Activated CD8-positive, alpha-beta T cell treated with anti-CD3 and anti-CD28 coated beads, Interleukin-2, amount 10 ng/mL, durations not matched to agents 7 days and 5 days (primary cell): ENCODE measurements at regions of chr17 and their contacts with region 1.

Region 1: GRCh38 chr17:44218344-44219107 is 949 bp downstream of the UBTF start:
- DNase-seq: peak; percentile 90
- ATAC-seq: peak; percentile 60
- H3K4me3 Mint-ChIP-seq: peak overlapping the region; percentile 97
- H3K27ac Mint-ChIP-seq: peak overlapping the region; percentile 85
- H3K4me1 Mint-ChIP-seq: peaks cover 46% of the 10 kb centered on the region
- H3K27me3 Mint-ChIP-seq: no peaks in the 10 kb centered on the region

Region 2: DNA sequence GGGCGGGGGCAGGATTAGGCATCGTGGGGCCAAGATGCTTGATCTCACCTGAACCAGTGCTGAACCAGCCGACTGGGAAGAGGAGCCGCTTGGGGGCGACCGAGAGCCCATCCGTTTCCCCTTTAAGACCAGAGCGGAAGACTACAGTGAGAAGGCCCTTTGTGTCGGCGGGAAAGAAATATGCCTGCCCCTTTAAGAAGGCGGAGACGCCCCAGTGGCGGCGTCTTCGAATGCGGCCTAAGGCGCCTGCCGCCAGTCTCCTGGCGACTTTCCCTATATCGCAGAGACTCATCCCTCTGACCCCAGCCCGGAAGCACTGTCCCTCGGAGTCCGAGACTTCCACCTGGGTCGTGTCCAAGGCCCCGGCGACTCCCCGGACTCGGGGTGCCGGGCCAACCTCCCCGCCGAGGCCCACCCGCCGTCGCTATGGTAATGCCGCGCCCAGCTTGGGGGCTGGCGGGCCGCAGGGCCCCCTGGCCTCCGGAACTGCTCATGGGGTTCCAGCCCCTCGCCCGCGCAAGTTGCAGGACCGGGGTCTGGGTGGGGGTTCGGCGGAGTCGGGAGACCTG is 76.7 kb before region 1 on chr17 and contains the start of gene HROB:
- CTCF ChIA-PET with region 1: no interaction called
- POLR2A ChIA-PET with region 1: no interaction called
- DNase-seq: peak; percentile 99
- ATAC-seq: peak; percentile 96
- H3K4me3 Mint-ChIP-seq: peak within 1 kb of the TSS; percentile 88
- H3K27ac Mint-ChIP-seq: peak within 1 kb of the TSS; percentile 91
- H3K4me1 Mint-ChIP-seq: peaks cover 32% of the 10 kb centered on the region
- H3K27me3 Mint-ChIP-seq: peaks cover 4% of the 10 kb centered on the region
- total RNA-seq, gene HROB: 16.4 to 18.0 TPM

Region 3: DNA sequence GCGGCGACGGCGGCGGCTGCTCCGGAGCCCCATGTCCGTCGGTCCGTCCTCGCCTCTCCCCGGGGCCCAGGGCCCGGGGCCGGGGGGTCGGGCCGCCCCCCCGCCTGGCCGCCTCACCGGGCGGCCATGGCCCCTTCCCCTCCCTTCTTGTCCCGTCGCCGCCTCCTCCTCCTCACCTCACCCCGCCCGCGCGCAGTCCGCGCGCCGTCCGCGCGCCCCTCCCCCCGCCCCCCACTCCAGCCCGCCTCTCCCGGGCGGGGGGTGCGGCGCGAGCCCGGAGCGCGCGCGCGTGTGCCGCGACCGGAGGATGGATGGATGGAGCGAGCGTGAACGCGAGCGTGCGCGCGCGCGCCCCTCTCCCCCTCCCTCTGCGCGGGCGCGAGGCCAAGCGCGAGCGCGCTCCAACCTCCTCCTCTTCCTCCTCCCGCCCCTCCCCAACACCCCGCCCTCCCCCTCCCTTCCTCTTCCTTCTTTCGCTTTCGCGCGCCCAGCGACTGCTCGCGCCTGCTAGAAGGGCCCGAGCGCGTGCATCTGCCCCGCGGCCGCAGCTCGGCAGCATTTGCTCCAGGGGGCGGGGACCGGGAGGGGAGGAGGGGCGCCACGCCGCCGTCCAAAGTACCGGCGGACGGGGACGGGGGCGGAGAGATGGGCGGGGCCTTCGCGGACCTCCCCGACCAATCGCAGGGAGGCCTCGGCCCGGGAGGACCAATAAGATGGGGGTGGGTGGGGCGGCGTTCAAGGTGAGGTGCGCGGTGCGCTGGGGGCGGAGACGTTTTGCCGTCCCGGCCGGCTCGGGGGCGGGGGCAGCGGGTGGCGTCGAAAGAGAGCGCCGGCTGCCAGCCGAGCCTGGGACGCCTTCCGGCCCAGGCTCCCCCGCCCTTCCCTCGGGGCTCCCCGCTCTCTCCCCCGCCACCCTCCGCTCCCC is 18.7 kb before region 1 on chr17 and contains the start of gene ATXN7L3:
- CTCF ChIA-PET with region 1: interaction called, 30 read pairs
- POLR2A ChIA-PET with region 1: interaction called, 15 read pairs
- DNase-seq: peak; percentile 100
- ATAC-seq: peak; percentile 84
- H3K4me3 Mint-ChIP-seq: peak within 1 kb of the TSS; percentile 88
- H3K27ac Mint-ChIP-seq: peak within 1 kb of the TSS; percentile 95
- H3K4me1 Mint-ChIP-seq: peaks cover 43% of the 10 kb centered on the region
- H3K27me3 Mint-ChIP-seq: no peaks in the 10 kb centered on the region
- total RNA-seq, gene ATXN7L3: 116 to 120 TPM

Region 4: GRCh38 chr17:44314869-44315661 is 96.5 kb after region 1 on chr17:
- CTCF ChIA-PET with region 1: interaction called, 12 read pairs
- POLR2A ChIA-PET with region 1: interaction called, 5 read pairs
- DNase-seq: peak; percentile 63
- ATAC-seq: peak; percentile 71
- H3K4me3 Mint-ChIP-seq: peak overlapping the region; percentile 57
- H3K27ac Mint-ChIP-seq: no peak overlapping the region
- H3K4me1 Mint-ChIP-seq: peaks cover 12% of the 10 kb centered on the region
- H3K27me3 Mint-ChIP-seq: peaks cover 38% of the 10 kb centered on the region

Region 5: DNA sequence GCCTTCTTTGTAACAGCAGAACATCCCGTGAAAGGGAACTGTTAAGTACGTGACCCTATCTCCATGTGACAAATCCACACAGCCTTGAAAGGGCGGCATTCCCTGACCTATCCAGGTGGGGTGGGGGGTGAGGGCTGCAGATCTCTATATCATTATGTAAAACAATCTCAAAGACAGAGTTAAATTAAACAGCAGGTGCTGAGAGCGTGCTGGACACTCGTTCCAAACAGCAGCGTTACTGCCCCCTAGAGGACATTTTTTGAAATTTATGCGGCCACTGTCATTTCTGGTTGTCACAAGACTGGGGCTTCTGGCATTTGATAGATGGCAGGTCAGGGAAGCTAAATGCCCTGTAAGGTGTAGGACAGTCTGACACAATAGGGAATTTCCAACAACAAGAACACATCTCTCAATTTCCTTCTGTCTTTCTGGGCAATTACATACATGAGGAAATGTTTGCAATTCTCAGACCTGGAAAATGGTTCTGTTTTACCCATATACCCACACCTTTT is 112.8 kb after region 1 on chr17:
- CTCF ChIA-PET with region 1: interaction called, 37 read pairs
- POLR2A ChIA-PET with region 1: interaction called, 59 read pairs
- DNase-seq: peak; percentile 87
- ATAC-seq: peak; percentile 42
- H3K4me3 Mint-ChIP-seq: no peak overlapping the region
- H3K27ac Mint-ChIP-seq: peak overlapping the region; percentile 49
- H3K4me1 Mint-ChIP-seq: peaks cover 18% of the 10 kb centered on the region
- H3K27me3 Mint-ChIP-seq: no peaks in the 10 kb centered on the region

Region 6: DNA sequence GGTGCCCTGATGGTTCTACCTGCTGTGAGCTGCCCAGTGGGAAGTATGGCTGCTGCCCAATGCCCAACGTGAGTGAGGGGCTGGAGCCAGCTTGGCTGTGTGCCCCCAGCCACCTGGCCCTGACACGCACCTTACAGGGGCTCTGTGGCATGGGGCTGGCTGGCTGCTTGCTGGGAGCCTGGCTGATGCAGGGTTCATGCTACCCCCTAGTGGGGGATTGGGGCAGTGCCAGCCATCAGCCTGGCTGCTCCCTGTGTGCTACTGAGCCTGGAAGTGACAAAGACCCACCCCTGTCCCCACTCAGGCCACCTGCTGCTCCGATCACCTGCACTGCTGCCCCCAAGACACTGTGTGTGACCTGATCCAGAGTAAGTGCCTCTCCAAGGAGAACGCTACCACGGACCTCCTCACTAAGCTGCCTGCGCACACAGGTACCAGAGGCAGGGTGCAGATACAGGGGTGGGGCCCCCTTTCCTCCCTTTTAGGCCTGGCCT is 132.3 kb after region 1 on chr17:
- CTCF ChIA-PET with region 1: interaction called, 68 read pairs
- POLR2A ChIA-PET with region 1: interaction called, 3 read pairs
- DNase-seq: peak; percentile 83
- ATAC-seq: peak; percentile 86
- H3K4me3 Mint-ChIP-seq: no peak overlapping the region
- H3K27ac Mint-ChIP-seq: no peak overlapping the region
- H3K4me1 Mint-ChIP-seq: peaks cover 18% of the 10 kb centered on the region
- H3K27me3 Mint-ChIP-seq: peaks cover 6% of the 10 kb centered on the region

Region 7: DNA sequence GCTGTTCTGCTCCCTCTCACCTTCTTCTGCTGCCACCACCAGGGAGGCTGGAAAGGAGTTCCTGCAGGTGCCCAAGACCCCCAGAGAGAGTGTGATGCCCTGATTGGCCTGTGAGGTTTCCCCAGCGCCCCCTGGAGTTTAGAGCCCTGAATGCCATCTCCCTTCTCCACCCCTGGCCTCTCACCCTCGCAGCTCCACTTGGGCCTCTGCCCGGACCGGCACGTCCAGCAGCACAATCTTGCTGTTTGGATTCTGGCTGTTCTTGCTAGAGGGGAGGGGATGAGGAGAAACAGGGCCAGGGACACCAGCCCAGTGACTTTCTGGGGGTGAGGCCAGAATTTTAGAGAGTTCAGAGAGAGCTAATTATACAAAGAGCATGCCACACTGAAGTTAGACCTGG is 157.6 kb after region 1 on chr17:
- CTCF ChIA-PET with region 1: no interaction called
- POLR2A ChIA-PET with region 1: no interaction called
- DNase-seq: peak; percentile 38
- ATAC-seq: peak; percentile 49
- H3K4me3 Mint-ChIP-seq: no peak overlapping the region
- H3K27ac Mint-ChIP-seq: no peak overlapping the region
- H3K4me1 Mint-ChIP-seq: no peaks in the 10 kb centered on the region
- H3K27me3 Mint-ChIP-seq: peaks cover 7% of the 10 kb centered on the region